ENCODE measurements at regions of chrX and their contacts with region 1.

Region 1: GRCh38 chrX:23907498-23908218 is at the starts of genes APOO and CXorf58:
- DNase-seq: peak; percentile 94
- ATAC-seq: peak; percentile 89
- H3K4me3 ChIP-seq: peak within 1 kb of the TSS; percentile 31 to 73 (median 60)
- H3K4me3 Mint-ChIP-seq: peak within 1 kb of the TSS; percentile 88
- H3K27ac ChIP-seq: peak within 1 kb of the TSS; percentile 91 to 92
- H3K27ac Mint-ChIP-seq: peak within 1 kb of the TSS; percentile 94
- H3K4me1 ChIP-seq: peaks cover 4 to 15% of the 10 kb centered on the region in 2 donors
- H3K4me1 Mint-ChIP-seq: peaks cover 17% of the 10 kb centered on the region
- H3K27me3 ChIP-seq: no peaks in the 10 kb centered on the region
- H3K27me3 Mint-ChIP-seq: no peaks in the 10 kb centered on the region
- CTCF ChIP-seq: peak; percentile 57
- total RNA-seq, gene APOO: 7.2 and 11.7 TPM in 2 replicates
- total RNA-seq, gene CXorf58: not detected in 2 replicates

Region 2: DNA sequence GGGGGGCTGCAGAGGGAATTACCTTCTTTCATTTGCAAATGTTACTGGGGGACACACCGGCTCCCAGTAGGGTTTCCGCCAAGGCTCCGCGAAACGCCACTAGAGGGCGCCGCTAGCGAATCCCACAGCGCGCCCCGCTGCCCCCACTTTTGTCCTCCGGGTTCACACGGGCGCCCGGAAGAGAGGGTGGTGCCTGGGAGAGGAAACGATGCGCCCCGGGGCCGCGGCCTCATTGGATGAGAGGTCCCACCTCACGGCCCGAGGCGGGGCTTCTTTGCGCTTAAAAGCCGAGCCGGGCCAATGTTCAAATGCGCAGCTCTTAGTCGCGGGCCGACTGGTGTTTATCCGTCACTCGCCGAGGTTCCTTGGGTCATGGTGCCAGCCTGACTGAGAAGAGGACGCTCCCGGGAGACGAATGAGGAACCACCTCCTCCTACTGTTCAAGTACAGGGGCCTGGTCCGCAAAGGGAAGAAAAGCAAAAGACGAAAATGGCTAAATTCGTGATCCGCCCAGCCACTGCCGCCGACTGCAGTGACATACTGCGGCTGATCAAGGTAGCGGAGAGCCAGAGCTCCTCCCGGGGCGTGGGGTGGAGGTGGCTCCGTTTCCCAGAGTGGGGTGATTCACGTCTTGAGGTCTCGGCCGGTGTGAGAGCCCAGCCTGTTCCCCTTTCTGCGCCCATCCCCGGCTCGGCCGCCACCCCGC is 124.6 kb before region 1 on chrX and contains the start of gene SAT1:
- CTCF ChIA-PET with region 1: interaction called, 64 read pairs
- POLR2A ChIA-PET with region 1: interaction called, 11 read pairs
- intact Hi-C with region 1: loop called (anchors 1 kb)
- DNase-seq: peak; percentile 95
- ATAC-seq: peak; percentile 88
- H3K4me3 ChIP-seq: peak within 1 kb of the TSS; percentile 71 to 92 (median 81)
- H3K4me3 Mint-ChIP-seq: peak within 1 kb of the TSS; percentile 94
- H3K27ac ChIP-seq: peak within 1 kb of the TSS; percentile 87 to 92
- H3K27ac Mint-ChIP-seq: peak within 1 kb of the TSS; percentile 98
- H3K4me1 ChIP-seq: peaks cover 17 to 37% of the 10 kb centered on the region in 2 donors
- H3K4me1 Mint-ChIP-seq: peaks cover 32% of the 10 kb centered on the region
- H3K27me3 ChIP-seq: no peaks in the 10 kb centered on the region
- H3K27me3 Mint-ChIP-seq: no peaks in the 10 kb centered on the region
- CTCF ChIP-seq: peak; percentile 72
- total RNA-seq, gene SAT1: 162 and 172 TPM in 2 replicates

Region 3: GRCh38 chrX:24024819-24025740 is 117.4 kb after region 1 on chrX:
- CTCF ChIA-PET with region 1: interaction called, 6 read pairs
- POLR2A ChIA-PET with region 1: interaction called, 8 read pairs
- intact Hi-C with region 1: loop called (anchors 1 kb)
- DNase-seq: peak; percentile 88
- ATAC-seq: peak; percentile 89
- H3K4me3 ChIP-seq: peak overlapping the region; percentile 54 to 81 (median 79)
- H3K4me3 Mint-ChIP-seq: peak overlapping the region; percentile 85
- H3K27ac ChIP-seq: peak overlapping the region; percentile 77 to 93
- H3K27ac Mint-ChIP-seq: peak overlapping the region; percentile 82
- H3K4me1 ChIP-seq: peaks cover 4 to 10% of the 10 kb centered on the region in 2 donors
- H3K4me1 Mint-ChIP-seq: peaks cover 36% of the 10 kb centered on the region
- H3K27me3 ChIP-seq: no peaks in the 10 kb centered on the region
- H3K27me3 Mint-ChIP-seq: no peaks in the 10 kb centered on the region
- CTCF ChIP-seq: no peak

Region 4: GRCh38 chrX:24150051-24150790 is 242.6 kb after region 1 on chrX:
- CTCF ChIA-PET with region 1: no interaction called
- POLR2A ChIA-PET with region 1: no interaction called
- intact Hi-C with region 1: loop called (anchors 5 kb)
- DNase-seq: peak; percentile 94
- ATAC-seq: peak; percentile 69
- H3K4me3 ChIP-seq: peak overlapping the region; percentile 61 to 90 (median 72)
- H3K4me3 Mint-ChIP-seq: peak overlapping the region; percentile 87
- H3K27ac ChIP-seq: peak overlapping the region; percentile 90 to 98
- H3K27ac Mint-ChIP-seq: peak overlapping the region; percentile 87
- H3K4me1 ChIP-seq: peaks cover 38 to 56% of the 10 kb centered on the region in 2 donors
- H3K4me1 Mint-ChIP-seq: peaks cover 50% of the 10 kb centered on the region
- H3K27me3 ChIP-seq: no peaks in the 10 kb centered on the region
- H3K27me3 Mint-ChIP-seq: no peaks in the 10 kb centered on the region
- CTCF ChIP-seq: peak; percentile 34

Measured in B cell (primary cell).